Sciatic nerve (tissue), 2 donors: ENCODE measurements at regions of chr16 and their contacts with region 1.

Region 1: DNA sequence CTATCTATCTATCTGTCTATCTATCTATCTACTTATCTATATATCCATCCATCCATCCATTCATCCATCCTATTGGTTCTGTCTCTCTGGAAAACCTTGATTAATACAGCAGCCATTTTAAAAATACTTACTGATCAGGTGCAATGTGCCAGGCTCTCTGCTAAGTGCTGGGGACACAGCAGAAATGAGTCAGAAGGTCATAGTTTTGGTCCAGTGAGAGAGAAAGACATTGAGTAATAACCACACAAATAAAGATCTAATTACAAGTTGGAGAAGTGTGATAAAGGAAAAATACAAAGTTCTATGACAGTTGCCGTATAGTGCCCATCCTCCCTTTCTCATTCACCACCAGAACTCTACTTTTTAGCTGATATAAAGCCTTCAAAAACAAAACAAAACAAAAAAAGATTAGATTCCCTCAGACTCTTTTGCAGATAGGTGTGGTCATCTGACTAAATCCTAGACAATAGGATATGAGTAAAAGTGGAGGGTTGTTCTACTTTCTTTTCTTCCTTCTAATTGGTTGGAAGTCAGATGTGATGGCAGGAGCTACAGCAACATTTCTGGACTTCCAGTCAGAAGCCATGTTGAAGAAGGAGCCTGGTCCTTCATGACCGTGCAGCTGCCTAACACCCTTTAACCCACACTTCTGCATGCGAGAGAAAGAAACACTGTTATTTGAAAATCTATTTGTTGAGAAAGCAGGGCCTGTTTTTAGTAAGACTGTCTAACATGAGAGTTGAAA is 72.0 kb upstream of the TOX3 start:
- DNase-seq: no peak
- ATAC-seq: no peak

Region 2: GRCh38 chr16:52212841-52213240 is 406.1 kb before region 1 on chr16:
- intact Hi-C with region 1: no loop called
- DNase-seq: no peak
- ATAC-seq: no peak

Region 3: DNA sequence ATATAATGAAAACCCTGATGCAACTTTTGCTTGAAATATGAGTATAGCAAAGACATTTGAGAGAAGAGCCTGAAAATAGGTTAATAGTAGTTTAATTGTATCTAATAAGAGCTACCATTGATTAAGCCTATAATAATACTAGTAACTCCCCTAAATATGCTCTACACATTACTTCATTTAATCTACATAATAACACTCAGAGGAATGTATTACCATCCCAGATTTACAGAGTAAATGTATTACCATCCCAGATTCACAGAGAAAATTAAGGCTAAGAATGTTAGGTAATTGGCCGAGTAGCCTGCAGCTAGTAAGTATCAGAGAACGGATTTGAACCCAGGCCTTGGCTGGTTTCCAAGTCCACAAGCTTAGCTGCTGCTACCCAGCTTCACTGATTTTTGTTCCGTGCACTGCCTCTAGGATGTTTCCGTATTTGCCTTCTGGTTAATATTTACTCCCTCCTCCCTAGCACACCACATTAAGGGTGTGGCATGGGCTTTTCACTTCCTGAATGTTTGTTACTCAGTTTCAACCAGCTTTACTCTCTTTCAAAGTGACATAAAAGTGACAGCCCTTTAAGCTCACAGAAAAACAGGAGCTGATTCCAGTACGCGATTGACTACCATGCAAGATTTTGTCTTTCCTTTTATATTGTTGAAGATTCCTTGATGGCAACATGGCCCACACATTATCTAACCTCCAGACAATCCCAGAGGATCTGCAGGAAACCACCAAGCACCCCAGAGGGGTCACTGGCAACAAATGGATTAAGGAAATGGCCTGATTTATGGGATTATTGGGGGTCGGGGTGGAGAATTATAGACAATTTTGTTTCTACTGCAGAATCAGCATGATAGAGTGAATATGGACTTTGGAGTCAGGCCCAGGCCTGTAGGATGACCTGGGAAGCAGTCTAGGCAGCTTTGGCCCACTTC is 45.3 kb before region 1 on chr16:
- intact Hi-C with region 1: no loop called
- DNase-seq: no peak
- ATAC-seq: no peak

Region 4: GRCh38 chr16:52690468-52690867 is 71.5 kb after region 1 on chr16:
- intact Hi-C with region 1: loop called (anchors 2 kb)
- DNase-seq: no peak
- ATAC-seq: no peak